PC-9 (cell line): ENCODE measurements at regions of chr1 and their contacts with region 1.

Region 1: DNA sequence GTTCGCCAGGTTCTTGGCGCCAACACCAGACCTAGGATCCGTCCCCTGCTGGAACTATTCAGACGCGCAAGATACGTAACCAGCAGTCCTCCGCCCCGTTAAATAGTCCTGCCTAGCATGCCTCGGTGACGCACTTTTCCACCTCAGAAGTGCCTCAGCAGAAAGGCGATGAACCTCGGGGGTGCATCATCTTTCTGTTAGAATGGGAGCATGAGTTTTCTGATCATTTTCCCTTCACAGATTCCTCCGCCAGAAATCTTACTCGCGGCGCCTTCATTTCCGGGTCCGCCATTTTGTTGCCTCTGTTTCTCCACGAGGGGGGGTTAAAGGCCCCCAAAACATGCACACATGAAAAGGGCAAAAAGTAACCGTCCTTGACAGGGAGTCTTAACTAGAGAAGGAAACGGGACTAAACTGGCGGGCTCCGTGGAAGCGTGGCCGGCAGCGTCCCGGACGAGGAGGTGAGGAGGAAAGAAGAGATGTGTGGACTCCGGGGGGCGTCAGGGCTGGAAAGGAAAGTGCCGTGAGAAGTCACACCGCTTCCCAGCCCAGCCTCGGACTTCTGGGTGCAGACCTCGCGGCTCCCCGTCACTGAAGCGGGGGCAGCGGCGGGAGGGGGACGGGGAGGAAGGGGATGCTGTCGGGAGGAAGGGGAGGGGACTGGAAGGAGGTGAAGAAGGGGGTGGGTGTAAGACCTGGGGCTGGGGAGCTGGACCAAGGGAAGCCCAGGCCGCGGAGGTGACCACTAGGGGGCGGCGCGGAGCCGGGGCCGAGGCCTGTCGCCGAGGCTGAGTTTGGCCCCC is at the start of gene GABPB2:
- DNase-seq: peak; percentile 78 to 85
- H3K4me3 ChIP-seq: peak within 1 kb of the TSS; percentile 84
- H3K27ac ChIP-seq: peak within 1 kb of the TSS; percentile 89
- H3K4me1 ChIP-seq: peaks cover 17% of the 10 kb centered on the region
- H3K27me3 ChIP-seq: no peaks in the 10 kb centered on the region
- CTCF ChIP-seq: peak; percentile 87
- total RNA-seq, gene GABPB2: 6.4 and 6.6 TPM in 2 replicates

Region 2: GRCh38 chr1:150696590-150697524 is 373.8 kb before region 1 on chr1 and contains the start of gene GOLPH3L:
- CTCF ChIA-PET with region 1: no interaction called
- POLR2A ChIA-PET with region 1: interaction called, 20 read pairs
- intact Hi-C with region 1: no loop called
- DNase-seq: peak; percentile 95 to 99
- H3K4me3 ChIP-seq: peak within 1 kb of the TSS; percentile 83
- H3K27ac ChIP-seq: peak within 1 kb of the TSS; percentile 40
- H3K4me1 ChIP-seq: peaks cover 10% of the 10 kb centered on the region
- H3K27me3 ChIP-seq: no peaks in the 10 kb centered on the region
- CTCF ChIP-seq: no peak
- total RNA-seq, gene GOLPH3L: 36.5 and 52.7 TPM in 2 replicates

Region 3: GRCh38 chr1:151059078-151059907 is 11.4 kb before region 1 on chr1 and contains the start of gene CDC42SE1:
- CTCF ChIA-PET with region 1: interaction called, 3 read pairs
- POLR2A ChIA-PET with region 1: no interaction called
- intact Hi-C with region 1: loop called (anchors 1 kb)
- DNase-seq: peak; percentile 59 to 74
- H3K4me3 ChIP-seq: peak within 1 kb of the TSS; percentile 82
- H3K27ac ChIP-seq: no peak within 1 kb of the TSS
- H3K4me1 ChIP-seq: peaks cover 43% of the 10 kb centered on the region
- H3K27me3 ChIP-seq: no peaks in the 10 kb centered on the region
- CTCF ChIP-seq: peak; percentile 72
- total RNA-seq, gene CDC42SE1: 59.4 and 62.8 TPM in 2 replicates

Region 4: GRCh38 chr1:151156515-151156819 is 85.8 kb after region 1 on chr1 and contains the start of gene TNFAIP8L2:
- CTCF ChIA-PET with region 1: no interaction called
- POLR2A ChIA-PET with region 1: no interaction called
- intact Hi-C with region 1: loop called (anchors 2 kb)
- DNase-seq: no peak
- H3K4me3 ChIP-seq: no peak within 1 kb of the TSS
- H3K27ac ChIP-seq: no peak within 1 kb of the TSS
- H3K4me1 ChIP-seq: no peaks in the 10 kb centered on the region
- H3K27me3 ChIP-seq: no peaks in the 10 kb centered on the region
- CTCF ChIP-seq: no peak
- total RNA-seq, gene TNFAIP8L2: not detected in 2 replicates

Region 5: DNA sequence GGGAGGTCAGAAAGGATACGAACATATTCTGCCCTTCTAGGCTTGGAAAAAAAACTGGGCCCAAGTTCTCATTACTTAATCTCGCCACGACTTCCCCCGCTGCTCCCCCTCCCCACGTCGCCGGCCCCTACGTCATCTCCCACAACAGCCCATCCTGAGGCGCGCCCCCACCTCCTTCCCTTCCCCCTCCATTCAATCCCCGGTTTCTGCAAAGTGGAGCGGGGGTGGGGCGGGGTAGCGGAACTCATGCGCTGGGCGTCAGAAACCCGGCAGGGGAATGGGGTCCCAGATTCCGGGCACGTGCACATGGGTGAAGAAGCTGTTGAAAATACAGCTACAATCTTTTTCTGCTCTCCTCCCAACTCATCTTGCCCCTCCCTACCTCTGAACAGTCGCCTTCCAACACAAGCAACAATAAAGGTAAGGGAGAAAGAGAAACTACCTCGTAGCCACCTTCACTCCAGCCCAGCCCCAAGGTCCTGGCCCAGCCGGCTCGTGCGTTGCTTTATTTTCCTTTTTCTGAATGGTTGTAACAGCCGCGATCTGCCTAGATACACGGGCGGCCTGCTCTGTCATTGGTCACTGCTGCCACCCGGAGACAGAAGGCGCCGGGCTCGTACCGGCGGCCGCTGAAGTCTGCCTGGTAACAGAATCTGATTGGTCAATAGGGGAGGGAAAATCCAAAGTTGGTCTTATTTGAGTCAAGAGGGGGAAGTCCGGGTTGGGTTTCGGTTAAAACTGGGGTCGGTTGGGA is 276.3 kb after region 1 on chr1 and contains the start of gene RFX5:
- CTCF ChIA-PET with region 1: no interaction called
- POLR2A ChIA-PET with region 1: interaction called, 24 read pairs
- intact Hi-C with region 1: no loop called
- DNase-seq: peak; percentile 93 to 94
- H3K4me3 ChIP-seq: peak within 1 kb of the TSS; percentile 82
- H3K27ac ChIP-seq: peak within 1 kb of the TSS; percentile 83
- H3K4me1 ChIP-seq: peaks cover 11% of the 10 kb centered on the region
- H3K27me3 ChIP-seq: no peaks in the 10 kb centered on the region
- CTCF ChIP-seq: no peak
- total RNA-seq, gene RFX5: 73.6 and 75.7 TPM in 2 replicates

Region 6: GRCh38 chr1:151762941-151763921 is 692.6 kb after region 1 on chr1 and contains the start of gene MRPL9:
- CTCF ChIA-PET with region 1: no interaction called
- POLR2A ChIA-PET with region 1: interaction called, 13 read pairs
- intact Hi-C with region 1: no loop called
- DNase-seq: peak; percentile 56 to 72
- H3K4me3 ChIP-seq: peak within 1 kb of the TSS; percentile 83
- H3K27ac ChIP-seq: peak within 1 kb of the TSS; percentile 66
- H3K4me1 ChIP-seq: peaks cover 29% of the 10 kb centered on the region
- H3K27me3 ChIP-seq: no peaks in the 10 kb centered on the region
- CTCF ChIP-seq: no peak
- total RNA-seq, gene MRPL9: 80.9 and 132 TPM in 2 replicates